GM12878 (cell line): ENCODE measurements at regions of chr2 and their contacts with region 1.

Region 1: DNA sequence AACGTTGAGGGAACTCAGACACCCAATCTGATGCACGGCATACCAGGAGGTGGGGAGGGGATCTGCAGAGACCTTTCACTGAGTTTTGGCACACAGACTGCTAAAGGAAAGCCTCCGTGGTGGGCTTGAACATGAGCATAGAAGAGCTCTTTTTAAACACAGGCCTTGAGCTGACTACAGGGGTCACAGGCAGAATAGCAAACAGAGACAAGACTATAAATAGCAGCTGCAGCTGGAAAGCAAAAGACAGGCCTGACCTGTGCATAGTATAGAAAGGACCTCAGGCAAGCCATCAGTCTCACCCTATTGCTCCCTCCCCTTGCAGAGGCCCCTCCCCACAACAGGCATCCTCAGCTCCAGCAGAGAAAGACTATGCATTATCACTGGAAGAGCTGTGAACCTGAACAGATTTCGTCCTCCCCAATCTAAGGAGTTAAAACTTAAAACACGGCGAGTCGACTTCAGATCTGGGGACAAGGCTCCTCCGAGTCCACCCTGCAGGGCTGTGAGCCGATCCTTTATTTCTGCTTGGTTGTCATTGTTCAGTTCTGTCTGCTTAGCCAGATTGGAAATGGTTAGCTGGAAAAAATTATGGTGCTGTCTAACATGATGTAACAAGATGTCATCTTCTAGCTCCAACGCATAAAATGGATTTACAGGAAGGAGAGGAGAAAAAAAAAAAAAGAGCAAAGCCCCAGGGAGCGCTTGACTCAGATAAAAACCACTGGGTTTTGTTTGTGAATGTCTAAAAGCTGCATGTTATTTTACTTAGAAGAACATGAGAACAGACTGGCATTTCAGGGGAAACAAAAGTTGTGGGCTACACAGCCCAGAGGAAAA is 25.2 kb upstream of the LCLAT1 start:
- DNase-seq: peak; percentile 28
- ATAC-seq: peak; percentile 77
- H3K4me3 ChIP-seq: 0 out of 2 replicates have a peak overlapping the region, but pooled peaks have one; percentile 17
- H3K27ac ChIP-seq: peak overlapping the region; percentile 6; the same call in 1 of the 2 replicates
- H3K4me1 ChIP-seq: peaks cover 25% of the 10 kb centered on the region
- H3K27me3 ChIP-seq: no peaks in the 10 kb centered on the region
- CTCF ChIP-seq: no peak
- EP300 ChIP-seq: no peak
- POLR2A ChIP-seq: no peak
- RAD21 ChIP-seq: no peak

Region 2: DNA sequence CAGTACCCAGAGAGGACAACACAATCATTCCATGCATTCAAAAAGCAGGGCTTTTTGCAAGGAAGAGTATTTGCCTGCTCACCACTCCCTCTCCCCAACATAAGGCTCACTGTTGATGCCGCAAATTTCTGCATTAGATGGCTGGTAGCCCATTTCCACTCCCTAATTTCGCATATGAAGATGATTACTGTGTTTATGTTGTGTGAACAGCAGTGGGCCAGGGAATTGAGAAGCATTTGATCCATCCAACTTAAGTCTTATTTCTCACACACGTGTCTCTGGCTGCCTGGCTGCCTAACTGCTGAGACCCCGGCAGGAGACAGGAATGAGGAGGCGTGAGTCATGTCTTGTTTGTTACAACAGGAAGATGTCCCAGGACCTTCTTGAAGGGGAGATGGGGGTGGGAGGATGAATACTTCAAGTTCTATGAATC is 794.5 kb before region 1 on chr2:
- CTCF ChIA-PET with region 1: no interaction called
- POLR2A ChIA-PET with region 1: no interaction called
- RAD21 ChIA-PET with region 1: no interaction called
- SMC1A ChIA-PET with region 1: no interaction called
- in situ Hi-C with region 1: no loop called
- intact Hi-C with region 1: no loop called
- DNase-seq: no peak
- ATAC-seq: no peak
- H3K4me3 ChIP-seq: no peak overlapping the region
- H3K27ac ChIP-seq: no peak overlapping the region
- H3K4me1 ChIP-seq: no peaks in the 10 kb centered on the region
- H3K27me3 ChIP-seq: peaks cover 0 to 2% of the 10 kb centered on the region in 2 experiments
- CTCF ChIP-seq: no peak
- EP300 ChIP-seq: no peak
- POLR2A ChIP-seq: no peak
- RAD21 ChIP-seq: no peak

Region 3: DNA sequence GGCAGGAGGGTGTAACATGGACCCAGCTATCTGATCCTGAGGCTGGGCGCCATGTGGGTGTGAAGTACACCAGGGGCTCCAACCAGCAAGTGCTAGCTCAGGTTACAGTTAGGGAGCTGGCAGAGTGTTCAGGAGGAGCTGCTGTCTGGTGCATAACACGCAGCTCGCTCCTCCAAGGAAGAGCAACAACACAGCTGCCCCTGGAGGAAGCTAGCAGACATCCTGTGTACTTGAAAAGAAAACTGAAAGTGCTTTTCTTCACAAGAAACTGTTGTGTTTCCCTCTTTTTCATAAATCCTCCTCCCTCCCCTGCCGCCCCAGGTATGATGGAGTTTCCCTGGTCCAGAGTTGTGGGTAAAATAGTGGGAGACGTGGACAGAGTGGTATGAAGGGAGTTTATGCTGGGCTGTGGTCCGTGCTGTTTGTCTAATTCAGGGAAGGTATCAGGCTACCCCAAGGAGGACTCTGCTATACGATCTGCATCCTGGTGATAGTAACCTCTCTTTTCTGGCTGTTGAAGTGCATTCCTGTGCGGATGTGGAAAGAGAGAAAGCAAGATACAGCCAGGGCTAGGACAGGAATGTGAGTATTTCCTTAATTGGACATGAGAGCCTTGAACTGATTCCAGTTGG is 196.6 kb before region 1 on chr2:
- CTCF ChIA-PET with region 1: interaction called, 5 read pairs
- POLR2A ChIA-PET with region 1: interaction called, 4 read pairs
- RAD21 ChIA-PET with region 1: interaction called, 17 read pairs
- SMC1A ChIA-PET with region 1: interaction called, 3 read pairs
- in situ Hi-C with region 1: no loop called
- intact Hi-C with region 1: no loop called
- DNase-seq: no peak
- ATAC-seq: peak; percentile 72
- H3K4me3 ChIP-seq: peak overlapping the region; percentile 56
- H3K27ac ChIP-seq: peak overlapping the region; percentile 95
- H3K4me1 ChIP-seq: peaks cover 45% of the 10 kb centered on the region
- H3K27me3 ChIP-seq: no peaks in the 10 kb centered on the region
- CTCF ChIP-seq: 0 out of 6 replicates have a peak, but pooled peaks of 1 of the 3 experiments have one; percentile 7
- EP300 ChIP-seq: no peak
- POLR2A ChIP-seq: peak; percentile 60
- RAD21 ChIP-seq: no peak

Region 4: DNA sequence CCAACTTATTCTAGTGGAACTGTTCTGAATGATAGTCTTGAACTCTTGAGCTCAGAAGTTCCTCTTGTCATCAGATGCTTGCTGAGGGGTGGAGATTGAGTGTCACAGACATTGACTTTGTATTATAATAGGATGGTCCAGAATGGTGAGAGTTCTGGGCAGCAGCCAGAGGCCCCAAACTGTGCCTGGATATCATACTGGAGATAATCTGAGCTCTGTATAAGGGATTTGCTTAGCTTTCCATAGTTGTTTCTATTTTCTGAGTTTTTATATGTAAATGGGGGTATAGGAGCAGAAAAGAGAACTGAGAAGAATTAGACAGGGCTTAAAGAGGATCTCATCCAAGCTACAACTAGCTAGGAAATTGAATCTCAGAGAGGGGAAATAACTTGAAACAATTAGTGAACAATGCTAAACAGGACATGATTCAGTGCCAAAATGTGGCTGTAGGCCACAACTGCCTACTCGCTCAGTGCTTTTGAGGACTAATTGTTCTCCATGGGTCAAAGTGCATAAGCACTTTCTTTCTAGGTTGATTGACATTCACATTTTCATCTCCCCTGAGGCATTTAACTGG is 15.1 kb after region 1 on chr2:
- CTCF ChIA-PET with region 1: interaction called, 14 read pairs
- POLR2A ChIA-PET with region 1: interaction called, 6 read pairs
- RAD21 ChIA-PET with region 1: interaction called, 22 read pairs
- SMC1A ChIA-PET with region 1: interaction called, 96 read pairs
- in situ Hi-C with region 1: no loop called
- intact Hi-C with region 1: no loop called
- DNase-seq: no peak
- ATAC-seq: peak; percentile 64
- H3K4me3 ChIP-seq: no peak overlapping the region
- H3K27ac ChIP-seq: no peak overlapping the region
- H3K4me1 ChIP-seq: peaks cover 2% of the 10 kb centered on the region; the same call in 1 of the 2 replicates
- H3K27me3 ChIP-seq: no peaks in the 10 kb centered on the region
- CTCF ChIP-seq: no peak
- EP300 ChIP-seq: no peak
- POLR2A ChIP-seq: no peak
- RAD21 ChIP-seq: no peak

Region 5: GRCh38 chr2:30447149-30448045 is 25.6 kb after region 1 on chr2 and contains the start of gene LCLAT1:
- CTCF ChIA-PET with region 1: no interaction called
- POLR2A ChIA-PET with region 1: interaction called, 3 read pairs
- RAD21 ChIA-PET with region 1: interaction called, 11 read pairs
- SMC1A ChIA-PET with region 1: interaction called, 23 read pairs
- in situ Hi-C with region 1: no loop called
- intact Hi-C with region 1: no loop called
- DNase-seq: peak; percentile 44
- ATAC-seq: peak; percentile 95
- H3K4me3 ChIP-seq: peak within 1 kb of the TSS; percentile 93
- H3K27ac ChIP-seq: peak within 1 kb of the TSS; percentile 77
- H3K4me1 ChIP-seq: no peaks in the 10 kb centered on the region; the same call in 1 of the 2 replicates
- H3K27me3 ChIP-seq: no peaks in the 10 kb centered on the region
- CTCF ChIP-seq: no peak; a peak in 1 of 6 replicates
- EP300 ChIP-seq: no peak
- POLR2A ChIP-seq: peak; percentile 84
- RAD21 ChIP-seq: no peak
- polyA plus RNA-seq, gene LCLAT1: 8.1 to 33.0 TPM

Region 6: DNA sequence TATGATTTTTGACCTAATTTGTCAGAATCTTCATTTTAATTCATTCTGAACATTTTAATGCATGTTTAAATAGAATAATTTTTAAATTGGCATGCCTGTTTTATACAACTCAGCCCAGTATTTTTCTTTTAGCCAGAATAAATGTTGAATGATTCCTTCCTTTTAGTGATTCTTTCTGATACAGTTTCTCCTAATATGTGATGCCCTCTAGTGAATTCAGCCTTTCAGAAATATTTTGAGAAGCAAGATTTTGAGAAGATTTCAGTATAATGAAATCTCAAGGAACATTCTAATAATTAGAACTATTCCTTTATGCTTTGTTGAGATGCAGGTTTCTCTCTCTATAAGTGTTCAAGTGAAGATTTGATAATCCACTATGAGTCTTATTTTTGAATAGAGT is 53.7 kb after region 1 on chr2:
- CTCF ChIA-PET with region 1: interaction called, 3 read pairs
- POLR2A ChIA-PET with region 1: no interaction called
- RAD21 ChIA-PET with region 1: interaction called, 4 read pairs
- SMC1A ChIA-PET with region 1: interaction called, 16 read pairs
- in situ Hi-C with region 1: no loop called
- intact Hi-C with region 1: no loop called
- DNase-seq: no peak
- ATAC-seq: no peak
- H3K4me3 ChIP-seq: no peak overlapping the region
- H3K27ac ChIP-seq: no peak overlapping the region
- H3K4me1 ChIP-seq: peaks cover 3% of the 10 kb centered on the region; the same call in 1 of the 2 replicates
- H3K27me3 ChIP-seq: no peaks in the 10 kb centered on the region
- CTCF ChIP-seq: no peak; a peak in 1 of 6 replicates
- EP300 ChIP-seq: no peak
- POLR2A ChIP-seq: no peak
- RAD21 ChIP-seq: peak; percentile 35